Dendritic cell treated with granulocyte-macrophage colony-stimulating factor and Interleukin-4, amounts not matched to agents 40 ng/mL and 50 ng/mL, for 4 days (primary cell): ENCODE measurements at regions of chr4 and their contacts with region 1.

Region 1: GRCh38 chr4:139295206-139295941 is 5.9 kb upstream of the NAA15 start:
- H3K4me3 Mint-ChIP-seq: peak overlapping the region; percentile 88
- H3K27ac Mint-ChIP-seq: peak overlapping the region; percentile 97
- H3K4me1 Mint-ChIP-seq: peaks cover 11% of the 10 kb centered on the region
- H3K27me3 Mint-ChIP-seq: no peaks in the 10 kb centered on the region

Region 2: DNA sequence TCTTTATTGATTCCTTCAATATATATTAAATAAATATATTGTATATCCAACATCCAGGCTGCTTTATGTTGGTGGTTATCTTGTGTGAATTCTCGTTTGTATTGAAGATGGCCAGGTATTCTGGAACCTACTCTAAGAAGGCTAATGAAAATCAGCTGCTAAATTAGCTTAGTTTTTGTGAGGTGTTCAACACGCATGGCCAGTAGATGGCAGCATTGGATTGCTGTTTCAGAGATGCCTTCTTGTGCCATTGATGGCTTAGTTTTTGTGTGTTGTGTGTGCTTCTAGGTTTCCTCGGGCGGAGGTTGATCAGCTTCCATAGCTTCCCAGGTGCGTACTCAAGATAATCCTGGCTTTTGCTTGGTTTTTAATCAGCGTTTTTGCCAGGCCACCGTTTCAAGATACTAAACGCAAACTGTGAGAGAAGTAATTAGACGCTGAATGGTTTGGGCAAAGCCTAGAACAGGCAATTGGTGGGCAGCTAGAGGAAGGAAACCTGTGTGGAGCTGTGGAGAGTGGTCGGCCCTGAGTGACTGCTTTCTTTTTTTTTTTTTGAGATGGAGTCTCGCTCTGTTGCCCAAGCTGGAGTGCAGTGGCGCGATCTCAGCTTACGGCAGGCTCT is 264.6 kb before region 1 on chr4:
- intact Hi-C with region 1: loop called (anchors 5 kb)
- H3K4me3 Mint-ChIP-seq: no peak overlapping the region
- H3K27ac Mint-ChIP-seq: no peak overlapping the region
- H3K4me1 Mint-ChIP-seq: peaks cover 52% of the 10 kb centered on the region
- H3K27me3 Mint-ChIP-seq: no peaks in the 10 kb centered on the region

Region 3: DNA sequence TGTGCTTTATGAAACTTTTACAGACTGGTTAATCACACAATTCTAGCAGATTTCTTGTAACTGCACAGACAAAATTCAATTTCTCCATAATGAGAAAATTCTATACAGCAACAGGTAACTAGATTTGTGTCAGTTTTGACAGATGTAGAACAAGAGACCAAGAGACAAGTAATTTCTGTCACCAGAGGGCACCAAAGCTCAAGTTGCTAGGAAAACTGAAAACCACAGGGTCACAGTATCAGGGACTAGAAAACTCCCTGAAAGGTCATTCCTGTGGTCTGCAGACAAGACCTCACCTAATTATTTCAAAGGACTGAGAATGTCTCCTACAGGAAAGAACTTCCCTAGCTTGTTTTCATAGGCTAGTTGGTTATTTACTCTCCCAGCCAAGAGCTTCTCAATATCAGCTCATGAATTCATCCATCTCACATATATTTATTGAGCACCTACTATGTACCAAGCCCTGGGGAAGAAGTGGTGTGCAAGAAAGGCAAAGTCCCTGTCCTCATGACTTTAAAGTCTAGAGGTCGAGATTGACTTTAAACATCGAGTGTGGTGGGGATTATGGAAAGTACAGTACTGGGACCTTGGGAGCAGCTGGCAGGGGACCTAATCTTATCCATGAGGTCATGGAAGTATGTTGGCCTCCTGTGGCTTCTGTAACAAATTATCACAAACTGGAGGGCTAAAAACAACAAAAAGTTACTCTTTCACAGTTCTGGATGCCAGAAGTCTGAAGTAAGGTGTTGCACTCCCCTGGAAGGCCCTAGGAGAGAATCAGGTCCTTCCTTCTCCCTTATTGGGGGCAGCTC is 308.4 kb after region 1 on chr4:
- intact Hi-C with region 1: no loop called
- H3K4me3 Mint-ChIP-seq: no peak overlapping the region
- H3K27ac Mint-ChIP-seq: no peak overlapping the region
- H3K4me1 Mint-ChIP-seq: peaks cover 13% of the 10 kb centered on the region
- H3K27me3 Mint-ChIP-seq: peaks cover 4% of the 10 kb centered on the region